ENCODE measurements at regions of chr16 and their contacts with region 1.

Region 1: DNA sequence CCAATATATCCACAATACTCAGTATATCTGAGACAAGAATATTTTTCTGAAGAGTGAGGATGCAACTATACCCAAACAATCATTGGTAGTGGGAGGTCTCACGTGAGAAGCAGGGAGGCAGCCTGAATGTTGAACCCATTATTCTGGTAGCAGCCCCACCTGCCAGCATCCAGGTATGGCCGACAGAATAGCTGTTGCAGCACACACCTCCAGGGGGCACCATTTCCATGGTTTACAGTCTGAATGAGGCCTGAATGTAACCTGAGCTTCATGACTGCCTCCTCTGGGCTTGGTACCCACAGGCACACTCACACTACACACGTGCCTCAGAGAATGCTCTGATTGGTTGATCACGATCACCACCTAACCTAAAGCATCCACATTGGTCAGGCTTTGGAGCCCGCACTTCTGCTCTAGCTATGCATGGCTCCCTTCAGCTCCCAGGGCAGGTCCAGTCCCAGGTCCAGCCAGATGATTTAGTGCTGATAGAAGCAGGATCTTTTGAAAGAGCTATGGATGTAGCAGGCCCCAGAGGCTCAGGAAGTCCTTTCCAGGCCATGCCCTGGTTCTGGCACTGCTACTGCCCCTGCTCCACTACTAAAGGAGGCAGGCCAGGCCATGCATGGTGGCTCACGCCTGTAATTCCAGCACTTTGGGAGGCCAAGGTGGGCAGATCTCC is 11.0 kb upstream of the CBFB start:
- DNase-seq: peak; percentile 87
- CTCF ChIP-seq: peak; percentile 93

Region 2: GRCh38 chr16:67159593-67160406 is 141.9 kb after region 1 on chr16 and contains the starts of genes FBXL8 and TRADD:
- in situ Hi-C with region 1: loop called (anchors 10 kb)
- DNase-seq: peak; percentile 91
- CTCF ChIP-seq: peak; percentile 52